Activated naive CD4-positive, alpha-beta T cell treated with anti-CD3 and anti-CD28 coated beads, Interleukin-2, amount 10 ng/mL, durations not matched to agents 7 days and 5 days (primary cell): ENCODE measurements at regions of chr1 and their contacts with region 1.

Region 1: DNA sequence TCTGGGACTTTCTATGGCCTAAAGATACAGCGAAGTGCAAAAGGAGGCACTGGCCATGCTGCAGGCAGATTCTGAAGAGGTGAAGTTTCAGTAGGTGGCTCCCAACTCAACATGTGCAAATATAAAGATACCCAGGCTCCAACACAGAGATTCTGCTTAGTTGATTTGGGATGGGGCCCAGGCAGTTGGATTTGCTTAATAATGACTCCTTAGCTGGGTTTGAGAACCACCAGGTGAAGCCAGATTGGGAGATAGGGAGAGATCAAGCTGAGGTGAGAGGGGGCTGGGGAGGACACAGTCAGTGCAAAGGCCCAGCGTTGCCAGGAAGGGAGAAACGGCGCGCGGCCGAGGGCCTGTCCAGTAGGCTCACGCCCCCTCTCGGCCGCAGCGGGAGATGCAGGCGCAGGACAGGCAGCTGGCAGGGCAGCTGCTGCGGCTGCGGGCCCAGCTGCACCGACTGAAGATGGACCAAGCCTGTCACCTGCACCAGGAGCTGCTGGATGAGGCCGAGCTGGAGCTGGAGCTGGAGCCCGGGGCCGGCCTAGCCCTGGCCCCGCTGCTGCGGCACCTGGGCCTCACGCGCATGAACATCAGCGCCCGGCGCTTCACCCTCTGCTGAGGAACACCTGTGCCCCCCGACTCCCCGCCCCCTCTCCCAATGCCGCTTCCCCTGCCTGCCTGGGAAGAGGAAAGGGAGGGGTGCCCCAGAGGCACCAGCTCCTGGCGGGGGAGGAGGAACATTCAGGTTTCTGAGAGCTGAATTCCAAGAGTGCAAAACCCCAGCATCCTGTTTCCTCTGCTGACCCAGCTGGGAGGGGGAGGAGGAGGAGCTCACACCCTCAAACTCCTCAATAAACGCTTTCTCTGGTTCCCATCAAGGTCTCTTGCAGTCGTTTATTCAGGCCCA is 1.2 kb downstream of the FAM167B start:
- DNase-seq: peak; percentile 85
- H3K4me3 Mint-ChIP-seq: peak overlapping the region; percentile 67
- H3K27ac Mint-ChIP-seq: peak overlapping the region; percentile 96
- H3K4me1 Mint-ChIP-seq: peaks cover 55% of the 10 kb centered on the region
- H3K27me3 Mint-ChIP-seq: no peaks in the 10 kb centered on the region

Region 2: DNA sequence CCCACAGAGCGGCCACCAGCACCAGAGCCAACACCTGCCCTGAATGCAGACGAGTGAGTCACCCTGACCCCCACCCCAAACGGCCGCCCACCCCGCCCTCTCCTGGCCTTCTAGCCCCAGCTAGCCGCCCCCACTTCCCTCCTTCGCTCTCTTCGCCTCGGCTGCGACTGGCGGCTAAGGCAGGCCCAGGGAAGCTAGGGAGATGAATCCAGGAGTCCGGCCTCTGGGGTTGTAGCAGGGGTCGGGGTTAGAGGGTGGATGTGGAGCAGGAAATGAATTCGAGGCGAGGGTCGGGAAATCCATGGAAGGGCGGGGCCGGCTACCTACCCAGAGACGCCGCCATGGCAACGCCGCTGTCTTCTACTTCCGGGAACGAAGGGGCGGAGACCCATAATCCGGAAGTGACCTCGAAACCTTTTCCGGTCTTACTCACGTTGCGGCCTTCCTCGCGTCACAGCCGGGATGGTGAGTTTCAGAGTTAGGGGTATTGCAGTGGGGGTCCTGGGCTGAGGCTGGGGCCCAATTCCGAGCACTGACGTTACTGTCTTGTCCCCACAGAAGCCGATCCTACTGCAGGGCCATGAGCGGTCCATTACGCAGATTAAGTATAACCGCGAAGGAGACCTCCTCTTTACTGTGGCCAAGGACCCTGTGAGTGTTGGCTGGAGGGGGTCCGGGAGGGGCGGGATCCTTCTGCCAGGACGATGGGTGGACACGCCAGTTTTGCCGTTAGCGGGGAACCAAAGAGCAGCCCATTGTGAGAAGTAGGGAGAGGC is 26.1 kb before region 1 on chr1 and contains the starts of genes EIF3I and TMEM234:
- CTCF ChIA-PET with region 1: interaction called, 61 read pairs
- DNase-seq: peak; percentile 96
- H3K4me3 Mint-ChIP-seq: peak within 1 kb of the TSS; percentile 97
- H3K27ac Mint-ChIP-seq: peak within 1 kb of the TSS; percentile 96
- H3K4me1 Mint-ChIP-seq: peaks cover 57% of the 10 kb centered on the region
- H3K27me3 Mint-ChIP-seq: no peaks in the 10 kb centered on the region

Region 3: DNA sequence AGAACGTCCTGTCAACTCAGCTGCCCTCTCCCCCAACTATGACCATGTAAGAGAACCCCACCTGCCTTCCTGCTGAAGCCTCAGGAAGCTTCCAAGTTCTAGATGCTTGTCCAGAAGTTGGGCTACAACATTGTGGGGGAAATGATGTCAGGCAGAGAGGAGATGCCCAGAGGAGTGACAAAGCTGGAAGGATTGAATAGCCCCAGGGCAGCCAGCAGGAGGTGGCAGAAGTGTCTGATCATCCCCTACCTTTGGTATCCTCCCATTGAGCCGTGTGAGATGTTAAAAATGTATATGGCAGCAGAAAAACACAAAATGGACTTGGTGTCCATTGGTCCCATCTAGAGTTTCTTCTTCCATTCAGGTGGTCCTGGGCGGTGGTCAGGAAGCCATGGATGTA is 19.5 kb before region 1 on chr1:
- CTCF ChIA-PET with region 1: interaction called, 19 read pairs
- DNase-seq: no peak
- H3K4me3 Mint-ChIP-seq: no peak overlapping the region
- H3K27ac Mint-ChIP-seq: no peak overlapping the region
- H3K4me1 Mint-ChIP-seq: peaks cover 20% of the 10 kb centered on the region
- H3K27me3 Mint-ChIP-seq: no peaks in the 10 kb centered on the region

Region 4: GRCh38 chr1:32263744-32264143 is 15.5 kb after region 1 on chr1:
- CTCF ChIA-PET with region 1: interaction called, 23 read pairs
- DNase-seq: peak; percentile 47
- H3K4me3 Mint-ChIP-seq: peak overlapping the region; percentile 42
- H3K27ac Mint-ChIP-seq: peak overlapping the region; percentile 86
- H3K4me1 Mint-ChIP-seq: peaks cover 62% of the 10 kb centered on the region
- H3K27me3 Mint-ChIP-seq: no peaks in the 10 kb centered on the region

Region 5: DNA sequence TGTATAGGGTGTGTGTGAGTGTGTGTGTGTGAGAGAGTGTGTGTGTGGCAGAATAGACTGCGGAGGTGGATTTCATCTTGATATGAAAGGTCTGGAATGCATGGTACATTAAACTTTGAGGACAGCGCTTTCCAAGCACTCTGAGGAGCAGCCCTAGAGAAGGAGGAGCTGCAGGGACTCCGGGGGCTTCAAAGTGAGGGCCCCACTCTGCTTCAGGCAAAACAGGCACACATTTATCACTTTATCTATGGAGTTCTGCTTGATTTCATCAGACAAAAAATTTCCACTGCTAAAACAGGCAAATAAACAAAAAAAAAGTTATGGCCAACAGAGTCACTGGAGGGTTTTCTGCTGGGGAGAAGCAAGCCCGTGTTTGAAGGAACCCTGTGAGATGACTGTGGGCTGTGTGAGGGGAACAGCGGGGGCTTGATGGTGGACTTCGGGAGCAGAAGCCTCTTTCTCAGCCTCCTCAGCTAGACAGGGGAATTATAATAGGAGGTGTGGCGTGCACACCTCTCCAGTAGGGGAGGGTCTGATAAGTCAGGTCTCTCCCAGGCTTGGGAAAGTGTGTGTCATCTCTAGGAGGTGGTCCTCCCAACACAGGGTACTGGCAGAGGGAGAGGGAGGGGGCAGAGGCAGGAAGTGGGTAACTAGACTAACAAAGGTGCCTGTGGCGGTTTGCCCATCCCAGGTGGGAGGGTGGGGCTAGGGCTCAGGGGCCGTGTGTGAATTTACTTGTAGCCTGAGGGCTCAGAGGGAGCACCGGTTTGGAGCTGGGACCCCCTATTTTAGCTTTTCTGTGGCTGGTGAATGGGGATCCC is 25.4 kb after region 1 on chr1:
- CTCF ChIA-PET with region 1: interaction called, 16 read pairs
- DNase-seq: peak; percentile 88
- H3K4me3 Mint-ChIP-seq: peak overlapping the region; percentile 70
- H3K27ac Mint-ChIP-seq: peak overlapping the region; percentile 90
- H3K4me1 Mint-ChIP-seq: peaks cover 65% of the 10 kb centered on the region
- H3K27me3 Mint-ChIP-seq: peaks cover 5% of the 10 kb centered on the region

Region 6: DNA sequence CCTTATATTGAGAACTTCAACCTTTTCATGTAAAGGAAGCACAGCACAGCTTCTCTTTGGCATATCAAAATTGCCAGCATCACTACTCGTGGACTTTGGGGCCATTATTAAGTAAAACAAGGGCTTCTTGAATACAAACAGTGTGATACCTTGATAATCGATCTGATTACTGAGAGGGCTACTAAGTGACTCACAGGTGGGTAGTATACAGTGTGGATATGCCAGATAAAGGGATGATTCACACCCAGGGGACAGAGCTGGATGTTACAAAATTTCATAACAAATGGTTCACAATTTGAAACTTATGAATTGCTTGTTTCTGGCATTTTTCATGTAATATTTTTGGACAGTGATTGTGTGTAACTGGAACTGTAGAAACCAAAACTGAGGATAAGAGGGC is 59.1 kb after region 1 on chr1:
- CTCF ChIA-PET with region 1: no interaction called
- DNase-seq: no peak
- H3K4me3 Mint-ChIP-seq: no peak overlapping the region
- H3K27ac Mint-ChIP-seq: peak overlapping the region; percentile 60
- H3K4me1 Mint-ChIP-seq: peaks cover 56% of the 10 kb centered on the region
- H3K27me3 Mint-ChIP-seq: no peaks in the 10 kb centered on the region